ENCODE measurements at regions of chr7 and their contacts with region 1.

Region 1: DNA sequence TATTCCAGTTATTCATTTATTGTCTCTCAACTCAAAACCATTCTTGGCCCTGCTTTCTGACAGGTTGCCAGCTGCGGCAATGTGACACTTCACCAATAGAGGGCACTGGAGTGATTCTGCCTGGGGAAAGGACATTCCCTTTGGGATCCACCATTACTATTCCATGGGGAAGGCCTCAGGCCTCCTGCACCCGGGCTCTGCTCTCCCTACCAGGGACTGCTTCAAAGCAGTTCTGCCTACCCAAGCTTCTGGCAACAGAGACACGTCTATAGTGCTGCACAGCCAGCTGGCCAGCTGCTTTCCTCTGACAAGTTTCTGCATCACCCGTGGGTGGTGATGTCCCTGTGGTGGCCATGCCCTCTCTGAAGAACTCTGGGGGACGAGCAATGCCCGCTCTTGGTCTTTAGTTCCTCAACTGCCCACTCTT is 163.8 kb downstream of the ELMO1 start:
- DNase-seq: peak; percentile 52
- CTCF ChIP-seq: peak; percentile 88

Region 2: DNA sequence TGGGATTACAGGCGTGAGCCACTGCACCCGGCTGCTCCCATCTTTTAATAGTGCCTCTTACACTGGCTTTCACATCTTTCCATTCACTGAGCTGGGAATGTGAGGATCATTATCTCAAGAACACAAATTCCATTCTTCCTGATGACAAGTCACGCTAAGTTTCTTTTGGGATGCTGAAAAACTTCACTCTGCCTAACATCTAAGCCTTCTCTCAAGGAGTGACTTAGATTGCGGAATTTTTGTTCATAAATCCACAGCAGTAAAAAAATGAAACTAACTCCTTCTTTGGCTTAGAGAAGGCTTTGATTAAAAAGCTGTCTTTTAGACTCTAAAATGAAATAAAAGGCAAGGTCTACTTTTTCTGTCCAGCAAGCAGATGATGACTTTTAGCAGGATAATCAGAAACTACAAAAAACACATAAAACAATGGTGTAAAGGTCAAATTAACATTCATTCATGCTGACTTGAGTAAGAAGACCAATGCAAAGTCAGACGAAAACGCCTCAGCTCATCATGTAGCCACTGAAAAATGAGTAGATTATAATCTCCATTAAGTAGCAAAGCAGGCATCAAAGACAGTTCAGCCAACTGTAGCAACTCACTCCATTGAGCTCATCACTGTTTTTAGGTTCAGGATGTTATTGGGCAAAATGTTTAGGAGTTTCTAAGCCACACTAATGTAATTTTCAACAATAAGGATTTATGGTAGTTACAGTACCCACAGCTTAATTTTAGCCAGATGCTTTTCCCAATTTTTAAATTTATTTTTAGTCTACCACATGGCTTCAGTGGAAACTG is 14.9 kb before region 1 on chr7:
- CTCF ChIA-PET with region 1: interaction called, 38 read pairs
- POLR2A ChIA-PET with region 1: interaction called, 4 read pairs
- DNase-seq: no peak
- CTCF ChIP-seq: no peak

Region 3: DNA sequence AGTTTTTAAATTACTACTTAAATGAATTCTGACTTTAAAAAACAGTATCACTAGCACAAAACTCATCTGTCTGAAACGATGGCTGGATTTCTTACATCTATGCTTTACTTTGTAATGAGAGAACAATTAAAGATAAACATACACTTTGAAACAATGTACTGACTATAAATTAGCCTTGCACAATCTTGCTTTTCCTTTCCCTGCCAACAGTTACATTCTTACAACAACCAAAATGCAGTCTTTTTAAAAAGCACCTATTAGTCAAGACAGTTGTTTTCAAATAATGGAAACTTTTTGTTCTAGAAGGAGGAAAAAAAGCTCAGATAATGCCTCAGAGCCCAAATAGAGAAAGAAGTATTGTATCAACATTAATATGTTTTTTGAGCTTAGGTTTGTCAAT is 10.6 kb after region 1 on chr7:
- CTCF ChIA-PET with region 1: interaction called, 27 read pairs
- POLR2A ChIA-PET with region 1: no interaction called
- DNase-seq: no peak
- CTCF ChIP-seq: no peak

Region 4: GRCh38 chr7:37336259-37336658 is 51.4 kb after region 1 on chr7:
- CTCF ChIA-PET with region 1: interaction called, 54 read pairs
- POLR2A ChIA-PET with region 1: no interaction called
- DNase-seq: peak; percentile 77
- CTCF ChIP-seq: no peak

Region 5: DNA sequence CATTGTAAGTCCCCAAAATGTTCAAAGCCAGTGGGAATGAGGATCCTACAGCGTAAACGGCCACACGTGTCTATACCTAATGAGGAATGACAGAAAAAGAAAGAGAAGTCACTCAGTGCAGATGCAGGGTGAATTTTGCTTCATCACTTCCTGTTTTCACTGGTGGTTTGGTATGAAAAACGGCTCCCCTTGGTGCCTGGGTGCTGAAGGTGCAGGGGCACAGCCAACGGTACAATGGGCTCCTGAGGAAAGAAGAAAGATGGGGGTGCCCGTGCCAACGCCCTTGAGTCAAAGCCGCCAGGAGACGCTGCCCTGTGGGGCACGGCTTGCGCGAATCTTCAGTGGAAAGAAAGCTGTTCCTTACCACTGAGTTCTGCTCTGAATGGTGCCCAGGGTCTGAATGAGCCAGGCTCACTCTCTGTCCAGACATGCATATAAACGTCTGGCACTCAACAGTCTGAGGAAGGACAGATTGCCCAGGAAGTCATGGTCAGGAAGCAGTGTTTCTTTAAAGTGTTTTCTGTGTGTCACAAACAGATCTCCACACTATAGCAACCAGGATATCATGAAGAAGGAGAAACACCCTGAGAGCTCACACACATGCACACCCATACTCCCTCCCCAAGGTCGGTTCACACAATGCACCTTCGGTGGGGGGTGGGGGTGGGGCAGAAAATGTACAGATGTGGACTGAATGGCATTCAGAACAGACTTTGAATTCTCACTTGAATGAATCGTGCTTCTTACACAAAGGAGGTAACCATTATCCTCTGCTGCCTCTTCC is 58.1 kb after region 1 on chr7:
- CTCF ChIA-PET with region 1: interaction called, 54 read pairs
- POLR2A ChIA-PET with region 1: no interaction called
- DNase-seq: peak; percentile 56
- CTCF ChIP-seq: peak; percentile 45

Measured in GM10248 (cell line).